Esophagus muscularis mucosa (tissue), 4 donors: ENCODE measurements at regions of chr3 and their contacts with region 1.

Region 1: DNA sequence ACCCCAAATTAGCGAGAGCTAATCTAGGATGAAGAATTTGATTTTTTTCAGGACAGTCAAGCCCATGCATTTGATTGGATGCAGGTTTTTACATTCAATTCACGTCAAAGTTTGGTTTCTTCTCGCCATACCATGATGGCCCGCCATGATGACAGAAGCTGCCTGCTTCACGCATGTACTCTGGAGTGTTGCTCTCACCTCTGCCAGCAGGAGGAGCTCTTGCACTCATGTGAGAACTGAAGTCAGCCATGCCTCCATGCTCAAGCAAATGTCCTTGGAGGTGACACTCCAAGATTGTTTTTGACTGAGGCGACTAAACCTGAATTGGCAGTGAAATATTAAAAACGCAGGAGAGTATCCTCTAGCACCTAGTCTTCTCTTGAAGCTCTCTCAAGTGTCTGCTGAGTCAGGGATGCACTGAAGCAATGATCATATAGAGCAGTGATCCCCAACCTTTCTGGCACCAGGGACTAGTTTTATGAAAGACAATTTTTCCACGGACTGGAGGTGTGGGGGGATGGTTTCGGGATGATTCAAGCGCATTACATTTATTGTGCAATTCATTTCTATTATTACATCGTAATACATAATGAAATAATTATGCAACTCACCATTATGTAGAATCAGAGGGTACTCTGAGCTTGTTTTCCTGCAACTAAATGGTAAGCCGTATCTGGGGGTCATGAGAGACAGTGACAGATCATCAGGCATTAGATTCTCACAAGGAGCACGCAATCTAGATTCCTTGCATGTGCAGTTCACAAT is 121.0 kb downstream of the SAMMSON start:
- DNase-seq: peak; percentile 90
- H3K4me3 ChIP-seq: no peak overlapping the region
- H3K27ac ChIP-seq: no peak overlapping the region
- H3K4me1 ChIP-seq: peaks cover 0 to 13% (median 11%) of the 10 kb centered on the region in 4 donors
- H3K27me3 ChIP-seq: no peaks in the 10 kb centered on the region
- CTCF ChIP-seq: peak; percentile 39 to 61 (median 45)
- EP300 ChIP-seq: no peak
- POLR2A ChIP-seq: no peak

Region 2: GRCh38 chr3:70358978-70359580 is 238.5 kb after region 1 on chr3:
- intact Hi-C with region 1: loop called (anchors 10 kb)
- DNase-seq: no peak
- H3K4me3 ChIP-seq: no peak overlapping the region
- H3K27ac ChIP-seq: no peak overlapping the region
- H3K4me1 ChIP-seq: peaks cover 0 to 8% (median 4%) of the 10 kb centered on the region in 4 donors
- H3K27me3 ChIP-seq: no peaks in the 10 kb centered on the region
- CTCF ChIP-seq: peak; percentile 61 to 71 (median 62)
- EP300 ChIP-seq: no peak
- POLR2A ChIP-seq: no peak